ENCODE measurements at regions of chr7 and their contacts with region 1.

Region 1: DNA sequence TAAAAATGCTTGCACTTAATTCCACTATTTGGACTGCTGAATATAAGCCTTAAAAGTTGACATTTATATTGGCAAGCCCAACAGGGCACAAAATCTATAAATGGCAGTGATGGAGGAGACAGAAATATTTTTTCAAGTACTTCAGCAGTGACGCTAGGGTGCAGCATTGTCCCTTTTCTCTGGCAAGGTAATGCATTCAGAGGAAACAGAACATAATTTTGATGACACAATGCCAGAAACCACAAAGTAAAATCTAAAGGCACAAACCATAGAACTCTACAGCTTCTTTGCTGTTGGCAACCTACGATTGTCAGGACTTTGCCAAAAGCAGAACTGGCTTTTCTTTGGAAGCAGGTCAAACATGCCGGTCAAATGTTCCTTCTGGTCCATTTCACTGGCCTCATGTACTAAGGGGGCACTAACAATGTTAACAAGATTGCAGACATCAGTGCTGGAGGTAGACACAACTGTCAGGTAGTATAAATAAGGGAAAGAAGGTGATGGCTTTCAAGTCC is 30.9 kb upstream of the FAM133B start:
- DNase-seq: peak; percentile 70 to 75
- H3K4me3 ChIP-seq: no peak overlapping the region
- H3K27ac ChIP-seq: peak overlapping the region; percentile 34; the same call in 1 of the 2 replicates
- H3K4me1 ChIP-seq: peaks cover 23% of the 10 kb centered on the region
- H3K27me3 ChIP-seq: no peaks in the 10 kb centered on the region
- CTCF ChIP-seq: peak; percentile 84

Region 2: GRCh38 chr7:90777465-90777864 is 1843.6 kb before region 1 on chr7:
- CTCF ChIA-PET with region 1: no interaction called
- POLR2A ChIA-PET with region 1: no interaction called
- intact Hi-C with region 1: no loop called
- DNase-seq: no peak
- H3K4me3 ChIP-seq: no peak overlapping the region
- H3K27ac ChIP-seq: no peak overlapping the region
- H3K4me1 ChIP-seq: no peaks in the 10 kb centered on the region
- H3K27me3 ChIP-seq: no peaks in the 10 kb centered on the region
- CTCF ChIP-seq: no peak

Region 3: GRCh38 chr7:92691578-92691977 is 70.5 kb after region 1 on chr7:
- CTCF ChIA-PET with region 1: no interaction called
- POLR2A ChIA-PET with region 1: no interaction called
- intact Hi-C with region 1: loop called (anchors 2 kb)
- DNase-seq: peak; percentile 8 to 66
- H3K4me3 ChIP-seq: no peak overlapping the region
- H3K27ac ChIP-seq: no peak overlapping the region
- H3K4me1 ChIP-seq: peaks cover 6% of the 10 kb centered on the region; the same call in 1 of the 2 replicates
- H3K27me3 ChIP-seq: no peaks in the 10 kb centered on the region
- CTCF ChIP-seq: peak; percentile 80

Region 4: GRCh38 chr7:92904292-92905131 is 283.4 kb after region 1 on chr7:
- CTCF ChIA-PET with region 1: no interaction called
- POLR2A ChIA-PET with region 1: no interaction called
- intact Hi-C with region 1: loop called (anchors 1 kb)
- DNase-seq: peak; percentile 88 to 93
- H3K4me3 ChIP-seq: no peak overlapping the region
- H3K27ac ChIP-seq: peak overlapping the region; percentile 89
- H3K4me1 ChIP-seq: peaks cover 21% of the 10 kb centered on the region
- H3K27me3 ChIP-seq: no peaks in the 10 kb centered on the region
- CTCF ChIP-seq: no peak

Region 5: GRCh38 chr7:92988051-92988450 is 367.0 kb after region 1 on chr7:
- CTCF ChIA-PET with region 1: no interaction called
- POLR2A ChIA-PET with region 1: no interaction called
- intact Hi-C with region 1: loop called (anchors 1 kb)
- DNase-seq: peak; percentile 5 to 57
- H3K4me3 ChIP-seq: no peak overlapping the region
- H3K27ac ChIP-seq: no peak overlapping the region
- H3K4me1 ChIP-seq: no peaks in the 10 kb centered on the region
- H3K27me3 ChIP-seq: no peaks in the 10 kb centered on the region
- CTCF ChIP-seq: peak; percentile 69

Region 6: DNA sequence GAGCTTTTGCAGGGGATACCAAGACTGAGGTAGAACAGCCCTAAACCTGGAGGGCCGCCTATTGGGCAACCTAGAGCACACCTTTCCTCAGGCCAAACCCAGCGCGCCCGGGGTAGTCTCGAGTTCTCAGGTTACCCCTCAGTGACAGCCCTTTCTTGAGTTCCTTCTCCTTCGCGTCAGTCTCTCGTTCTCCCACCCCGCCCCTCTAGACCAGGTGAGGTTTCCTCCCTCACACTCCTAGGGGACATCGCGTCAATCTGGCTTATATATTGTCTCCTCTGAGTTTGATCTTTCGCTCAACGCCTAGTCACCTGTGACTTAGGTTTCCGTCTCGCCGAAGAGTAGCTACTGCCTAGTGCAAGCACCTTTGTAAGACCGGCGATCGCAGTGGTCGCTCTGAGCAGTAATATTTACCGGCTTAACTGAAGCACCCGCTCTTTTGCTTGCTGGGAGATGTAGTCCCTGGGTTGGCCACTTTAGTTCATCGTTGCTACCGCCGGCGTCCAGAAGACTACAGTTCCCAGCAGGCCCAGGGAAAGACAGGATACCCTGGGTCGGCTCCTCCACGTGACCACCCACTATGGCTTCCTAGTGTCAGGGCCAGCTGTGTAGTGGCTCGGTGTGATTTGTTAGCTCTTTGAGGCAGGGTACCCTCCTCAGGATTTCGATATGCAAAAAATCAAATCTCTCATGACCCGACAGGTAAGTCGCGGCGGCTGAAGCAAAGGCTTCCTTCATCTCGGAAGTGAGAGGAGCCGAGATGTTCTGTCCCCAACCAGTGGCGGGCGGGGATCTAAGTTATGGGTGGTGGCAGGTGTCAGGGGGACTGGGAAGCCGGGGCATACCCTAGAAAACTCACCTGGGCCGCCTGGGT is 611.0 kb after region 1 on chr7 and contains the start of gene VPS50:
- CTCF ChIA-PET with region 1: no interaction called
- POLR2A ChIA-PET with region 1: no interaction called
- intact Hi-C with region 1: loop called (anchors 1 kb)
- DNase-seq: peak; percentile 95 to 96
- H3K4me3 ChIP-seq: peak within 1 kb of the TSS; percentile 70
- H3K27ac ChIP-seq: peak within 1 kb of the TSS; percentile 86
- H3K4me1 ChIP-seq: peaks cover 14% of the 10 kb centered on the region; the same call in 1 of the 2 replicates
- H3K27me3 ChIP-seq: no peaks in the 10 kb centered on the region
- CTCF ChIP-seq: peak; percentile 21; the same call in 1 of the 2 replicates
- total RNA-seq, gene VPS50: 20.3 and 32.2 TPM in 2 replicates

Measured in PC-9 (cell line).